ENCODE measurements at regions of chr10 and their contacts with region 1.

Region 1: DNA sequence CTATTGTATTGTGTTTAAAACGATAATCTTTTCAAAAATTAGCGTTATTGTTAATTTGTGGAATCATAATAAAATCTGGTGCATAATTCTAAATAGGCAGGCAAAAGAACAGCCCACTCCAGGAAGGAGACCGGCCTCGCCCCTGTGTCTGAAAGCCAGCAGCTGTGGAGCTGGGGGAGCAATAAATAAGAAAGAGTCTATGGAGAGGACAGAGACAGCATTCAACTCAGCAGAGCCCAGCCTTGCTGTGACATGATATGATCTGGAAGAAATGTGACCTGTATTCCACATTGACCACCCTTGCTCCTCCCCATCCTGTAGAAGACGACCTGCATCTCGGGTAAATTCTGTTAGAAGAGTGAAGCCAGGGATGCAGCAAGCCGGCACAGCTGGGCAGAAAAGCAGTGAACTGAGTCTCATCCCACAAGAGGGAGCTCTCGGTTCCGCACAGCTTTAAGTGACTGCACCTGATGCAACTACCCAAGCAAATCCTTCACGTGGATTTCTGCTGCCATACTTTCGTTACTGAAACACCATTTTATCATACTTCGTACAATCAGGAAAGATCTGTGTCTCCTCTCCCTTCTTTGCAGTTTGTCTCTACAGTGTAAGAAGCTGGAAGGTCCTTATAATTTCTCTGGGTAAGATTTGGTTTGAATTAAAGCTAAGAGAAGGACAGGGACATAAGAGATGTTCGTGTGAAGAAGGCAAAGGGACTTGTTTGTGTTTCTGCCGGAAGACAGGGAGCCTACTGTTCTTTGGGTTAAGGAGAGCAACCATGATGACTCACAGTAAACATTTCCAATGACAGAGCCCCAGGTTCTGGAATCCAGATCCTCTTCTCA is 427.1 kb downstream of the GPAM start:
- DNase-seq: peak; percentile 15
- H3K4me3 ChIP-seq: no peak overlapping the region
- H3K27ac ChIP-seq: no peak overlapping the region
- H3K4me1 ChIP-seq: no peaks in the 10 kb centered on the region
- H3K27me3 ChIP-seq: no peaks in the 10 kb centered on the region
- CTCF ChIP-seq: peak in 4 of 5 experiments; percentile 18 to 32 (median 26)
- EP300 ChIP-seq: no peak
- POLR2A ChIP-seq: no peak

Region 2: GRCh38 chr10:111962951-111963350 is 206.5 kb after region 1 on chr10:
- in situ Hi-C with region 1: no loop called
- intact Hi-C with region 1: loop called (anchors 2 kb)
- DNase-seq: no peak
- H3K4me3 ChIP-seq: no peak overlapping the region
- H3K27ac ChIP-seq: no peak overlapping the region
- H3K4me1 ChIP-seq: no peaks in the 10 kb centered on the region
- H3K27me3 ChIP-seq: no peaks in the 10 kb centered on the region
- CTCF ChIP-seq: no peak
- EP300 ChIP-seq: no peak
- POLR2A ChIP-seq: no peak

Region 3: DNA sequence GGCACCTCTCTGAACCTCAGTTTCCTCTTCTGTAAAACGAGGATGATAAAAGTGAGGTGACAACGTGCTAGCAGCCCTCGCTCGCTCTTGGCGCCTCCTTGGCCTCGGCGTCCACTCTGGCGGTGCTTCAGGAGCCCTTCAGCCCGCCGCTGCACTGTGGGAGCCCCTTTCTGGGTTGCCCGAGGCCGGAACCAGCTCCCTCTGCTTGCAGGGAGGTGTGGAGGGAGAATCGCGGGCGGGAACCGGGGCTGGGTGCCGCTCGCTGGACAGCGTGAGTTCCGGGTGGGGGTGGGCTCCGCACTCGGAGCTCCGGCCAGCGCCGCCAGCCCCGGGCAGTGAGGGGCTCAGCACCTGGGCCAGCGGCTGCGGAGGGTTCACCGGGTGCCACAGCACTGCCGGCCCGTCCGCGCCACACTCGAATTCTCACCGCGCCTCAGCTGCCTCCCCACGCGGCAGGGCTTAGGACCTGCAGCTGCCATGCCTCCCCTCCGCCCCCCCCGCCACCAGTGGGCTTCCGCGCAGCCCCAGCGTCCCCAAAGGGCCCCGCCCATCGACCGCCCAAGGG is 593.2 kb after region 1 on chr10:
- in situ Hi-C with region 1: no loop called
- intact Hi-C with region 1: no loop called
- DNase-seq: peak; percentile 1
- H3K4me3 ChIP-seq: no peak overlapping the region
- H3K27ac ChIP-seq: no peak overlapping the region
- H3K4me1 ChIP-seq: peaks cover 0 to 12% (median 12%) of the 10 kb centered on the region in 4 donors
- H3K27me3 ChIP-seq: no peaks in the 10 kb centered on the region
- CTCF ChIP-seq: no peak
- EP300 ChIP-seq: no peak
- POLR2A ChIP-seq: no peak